ENCODE measurements at regions of chr14 and their contacts with region 1.

Region 1: DNA sequence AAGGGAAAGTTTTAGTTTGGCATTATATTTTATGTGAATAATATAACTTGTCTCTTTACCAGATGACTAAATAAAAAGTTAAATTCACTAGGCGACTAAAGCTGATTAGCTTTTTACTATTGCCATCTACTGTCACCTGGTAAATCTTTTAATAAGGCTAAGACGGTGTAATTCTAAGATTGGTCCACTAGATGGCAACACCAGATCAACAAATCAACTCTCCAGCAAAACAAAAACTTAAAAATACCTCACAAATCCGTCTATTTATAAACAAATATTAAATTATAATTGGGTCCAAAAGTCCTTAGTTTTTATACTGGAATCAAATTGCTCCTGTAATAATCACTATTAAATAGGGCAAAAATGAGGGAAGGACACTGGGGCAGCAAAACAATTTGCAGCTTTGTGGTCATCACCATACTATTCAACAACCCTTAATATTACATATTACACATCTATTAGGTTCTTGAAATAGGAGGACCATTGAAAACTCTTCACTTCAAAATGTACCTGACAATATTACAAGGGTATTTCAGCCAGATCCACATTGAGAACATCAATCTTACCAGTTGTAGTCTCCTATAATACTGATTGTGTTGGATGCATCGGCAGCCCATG is 47.9 kb downstream of the GALC start:
- DNase-seq: peak; percentile 33 to 59 (median 39)
- H3K4me3 ChIP-seq: no peak overlapping the region
- H3K4me3 Mint-ChIP-seq: no peak overlapping the region
- H3K27ac ChIP-seq: no peak overlapping the region
- H3K27ac Mint-ChIP-seq: no peak overlapping the region
- H3K4me1 ChIP-seq: no peaks in the 10 kb centered on the region
- H3K4me1 Mint-ChIP-seq: peaks cover 5% of the 10 kb centered on the region
- H3K27me3 ChIP-seq: no peaks in the 10 kb centered on the region
- H3K27me3 Mint-ChIP-seq: peaks cover 0 to 1% (median 0%) of the 10 kb centered on the region in 3 donors
- CTCF ChIP-seq: peak; percentile 87

Region 2: DNA sequence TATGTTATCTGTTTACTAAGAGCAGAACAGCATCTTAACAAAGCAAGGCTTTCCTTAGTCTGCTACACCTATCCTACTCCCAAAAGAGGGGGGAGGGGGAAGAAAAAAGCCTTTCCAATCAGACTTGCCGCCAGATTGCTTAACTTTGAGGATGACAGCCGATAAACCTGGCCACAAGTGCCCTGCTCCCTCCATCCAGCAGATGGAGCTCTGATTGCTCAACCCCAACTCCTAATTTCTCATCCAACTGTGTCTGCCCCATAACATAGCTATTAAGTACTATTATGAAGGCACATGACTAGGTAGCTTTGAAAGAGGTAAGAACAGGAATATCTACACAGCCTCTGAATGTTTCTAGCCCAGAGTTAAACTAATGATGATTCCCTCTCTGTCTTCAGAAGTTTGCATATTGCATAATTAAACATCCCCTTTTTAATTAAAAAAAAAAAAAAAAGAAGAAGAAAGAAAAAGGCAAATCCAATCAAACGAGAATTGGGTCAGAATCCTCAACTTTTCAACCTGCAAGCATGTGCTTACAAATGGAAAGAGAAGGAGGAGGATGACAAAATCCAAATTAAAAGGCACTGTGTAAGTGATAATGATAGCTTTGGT is 199.5 kb before region 1 on chr14:
- intact Hi-C with region 1: no loop called
- DNase-seq: peak in 2 of 3 donors; percentile 7 to 26
- H3K4me3 ChIP-seq: no peak overlapping the region
- H3K4me3 Mint-ChIP-seq: no peak overlapping the region
- H3K27ac ChIP-seq: no peak overlapping the region
- H3K27ac Mint-ChIP-seq: peak overlapping the region in 1 of 7 donors; percentile 42
- H3K4me1 ChIP-seq: peaks cover 0 to 2% of the 10 kb centered on the region in 2 donors
- H3K4me1 Mint-ChIP-seq: peaks cover 2% of the 10 kb centered on the region
- H3K27me3 ChIP-seq: no peaks in the 10 kb centered on the region
- H3K27me3 Mint-ChIP-seq: peaks cover 0 to 4% (median 2%) of the 10 kb centered on the region in 3 donors
- CTCF ChIP-seq: peak; percentile 49

Region 3: GRCh38 chr14:87896393-87897380 is 48.4 kb before region 1 on chr14:
- intact Hi-C with region 1: no loop called
- DNase-seq: peak in 2 of 3 donors; percentile 11 to 19
- H3K4me3 ChIP-seq: no peak overlapping the region
- H3K4me3 Mint-ChIP-seq: peak overlapping the region in 1 of 2 donors; percentile 17
- H3K27ac ChIP-seq: no peak overlapping the region
- H3K27ac Mint-ChIP-seq: no peak overlapping the region
- H3K4me1 ChIP-seq: no peaks in the 10 kb centered on the region
- H3K4me1 Mint-ChIP-seq: no peaks in the 10 kb centered on the region
- H3K27me3 ChIP-seq: peaks cover 25 to 28% of the 10 kb centered on the region in 2 donors
- H3K27me3 Mint-ChIP-seq: peaks cover 4 to 17% (median 16%) of the 10 kb centered on the region in 3 donors
- CTCF ChIP-seq: peak; percentile 84

Region 4: DNA sequence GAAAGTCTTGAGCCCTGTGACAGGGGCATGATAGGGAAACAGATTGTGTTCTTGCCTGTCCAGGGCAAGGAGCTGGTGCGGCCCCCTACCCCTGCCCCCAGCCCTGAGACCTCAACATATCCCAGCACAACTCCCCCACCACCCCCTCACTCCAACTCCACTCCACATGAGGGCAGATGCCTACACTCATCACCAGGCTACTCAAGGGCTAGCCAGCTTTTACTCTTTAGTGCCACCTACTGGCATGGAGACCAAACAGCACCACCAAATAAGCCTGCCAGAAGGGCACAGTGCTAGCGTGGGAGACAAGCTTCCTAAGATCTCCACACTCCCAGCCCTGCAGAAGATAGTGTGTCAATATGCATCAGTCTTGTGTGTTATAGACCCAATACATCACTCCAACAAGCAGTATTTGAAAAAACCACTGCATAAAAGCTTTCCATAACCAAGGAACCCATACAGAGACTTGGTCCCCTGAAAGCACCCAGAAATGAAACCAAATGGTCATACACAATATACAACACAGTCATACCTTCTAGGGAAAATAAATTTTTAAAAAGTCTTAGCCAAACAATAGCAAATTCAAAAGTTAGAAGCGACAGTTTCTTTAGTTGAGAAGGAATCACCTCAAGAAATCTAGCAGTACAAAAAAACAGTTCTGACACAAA is 223.5 kb after region 1 on chr14:
- intact Hi-C with region 1: loop called in 1 of 2 experiments (anchors 5 kb)
- DNase-seq: peak; percentile 51 to 66 (median 65)
- H3K4me3 ChIP-seq: no peak overlapping the region
- H3K4me3 Mint-ChIP-seq: peak overlapping the region; percentile 45 to 67
- H3K27ac ChIP-seq: no peak overlapping the region
- H3K27ac Mint-ChIP-seq: peak overlapping the region in 1 of 7 donors; percentile 60
- H3K4me1 ChIP-seq: no peaks in the 10 kb centered on the region
- H3K4me1 Mint-ChIP-seq: peaks cover 16% of the 10 kb centered on the region
- H3K27me3 ChIP-seq: peaks cover 0 to 10% of the 10 kb centered on the region in 2 donors
- H3K27me3 Mint-ChIP-seq: peaks cover 23 to 27% (median 23%) of the 10 kb centered on the region in 3 donors
- CTCF ChIP-seq: peak; percentile 72

Region 5: DNA sequence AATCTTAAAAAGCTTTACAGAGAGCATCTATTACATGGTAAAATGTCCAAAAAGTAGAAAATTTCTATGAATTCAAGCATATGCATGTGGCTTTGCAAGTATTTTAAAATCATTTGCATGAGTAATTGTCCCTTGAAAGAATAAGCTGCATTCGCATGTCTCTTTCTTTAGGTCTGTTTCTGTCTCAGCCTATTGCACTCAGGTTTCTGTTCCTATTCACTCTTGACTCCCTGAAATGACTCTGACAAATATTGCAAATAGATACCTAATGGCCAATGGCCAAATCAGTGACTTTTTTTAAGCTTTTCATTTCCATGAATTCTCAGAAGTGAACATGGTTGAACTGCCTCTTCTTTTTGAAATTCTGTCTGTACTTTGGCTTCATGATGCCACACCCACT is 872.9 kb after region 1 on chr14:
- intact Hi-C with region 1: no loop called
- DNase-seq: no peak
- H3K4me3 ChIP-seq: no peak overlapping the region
- H3K4me3 Mint-ChIP-seq: no peak overlapping the region
- H3K27ac ChIP-seq: no peak overlapping the region
- H3K27ac Mint-ChIP-seq: no peak overlapping the region
- H3K4me1 ChIP-seq: no peaks in the 10 kb centered on the region
- H3K4me1 Mint-ChIP-seq: no peaks in the 10 kb centered on the region
- H3K27me3 ChIP-seq: no peaks in the 10 kb centered on the region
- H3K27me3 Mint-ChIP-seq: peaks cover 2 to 19% (median 6%) of the 10 kb centered on the region in 3 donors
- CTCF ChIP-seq: no peak